Activated CD4-positive, alpha-beta T cell treated with anti-CD3 and anti-CD28 coated beads for 36 hours (primary cell): ENCODE measurements at regions of chr17 and their contacts with region 1.

Region 1: GRCh38 chr17:8997994-8998628 is 23.2 kb upstream of the NTN1 start:
- DNase-seq: peak; percentile 89
- ATAC-seq: peak; percentile 73
- H3K4me3 Mint-ChIP-seq: no peak overlapping the region
- H3K27ac Mint-ChIP-seq: no peak overlapping the region
- H3K4me1 Mint-ChIP-seq: peaks cover 9% of the 10 kb centered on the region
- H3K27me3 Mint-ChIP-seq: peaks cover 24% of the 10 kb centered on the region

Region 2: GRCh38 chr17:8753976-8754440 is 244.1 kb before region 1 on chr17:
- CTCF ChIA-PET with region 1: interaction called, 5 read pairs
- POLR2A ChIA-PET with region 1: no interaction called
- intact Hi-C with region 1: loop called (anchors 1 to 5 kb)
- DNase-seq: no peak
- ATAC-seq: no peak
- H3K4me3 Mint-ChIP-seq: no peak overlapping the region
- H3K27ac Mint-ChIP-seq: no peak overlapping the region
- H3K4me1 Mint-ChIP-seq: no peaks in the 10 kb centered on the region
- H3K27me3 Mint-ChIP-seq: peaks cover 15% of the 10 kb centered on the region

Region 3: DNA sequence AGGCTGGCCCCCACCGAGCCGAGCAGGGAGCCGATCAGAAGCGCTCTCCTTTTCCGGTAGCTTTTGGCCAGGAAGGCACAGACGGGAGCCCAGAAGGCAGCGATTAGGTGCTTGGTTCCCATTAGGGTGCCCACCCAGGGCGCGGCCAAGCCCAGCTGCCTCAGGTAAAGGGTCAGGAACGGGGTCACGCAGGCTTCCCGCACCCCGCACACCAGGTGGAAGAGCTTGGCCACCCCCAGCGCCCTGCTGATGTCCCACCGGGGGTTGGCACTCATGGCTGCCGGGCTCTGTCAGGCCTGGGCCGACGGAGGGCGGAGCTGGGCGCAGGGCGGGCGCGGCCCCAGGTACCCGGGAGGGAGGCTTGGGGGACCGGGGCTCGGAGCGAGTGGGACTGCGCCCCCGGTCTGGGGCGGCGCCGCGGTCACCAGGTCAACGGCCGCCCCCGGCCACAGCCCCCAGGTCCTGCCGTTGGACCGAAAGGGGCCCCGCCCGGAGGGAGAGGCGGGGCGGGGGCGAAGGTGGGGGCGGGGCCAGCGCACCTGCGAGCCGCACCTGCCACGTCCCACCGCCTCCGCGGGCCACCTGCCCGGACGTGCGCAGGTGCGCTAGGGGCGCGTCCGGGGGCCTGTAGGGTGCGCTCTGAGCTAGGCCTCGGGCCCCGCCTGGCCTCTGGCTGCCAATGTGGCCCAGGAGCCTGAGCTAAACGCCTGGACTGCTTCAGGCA is 199.1 kb before region 1 on chr17 and contains the start of gene MFSD6L:
- CTCF ChIA-PET with region 1: interaction called, 8 read pairs
- POLR2A ChIA-PET with region 1: no interaction called
- intact Hi-C with region 1: loop called (anchors 1 to 5 kb)
- DNase-seq: peak; percentile 37
- ATAC-seq: peak; percentile 49
- H3K4me3 Mint-ChIP-seq: no peak within 1 kb of the TSS
- H3K27ac Mint-ChIP-seq: no peak within 1 kb of the TSS
- H3K4me1 Mint-ChIP-seq: no peaks in the 10 kb centered on the region
- H3K27me3 Mint-ChIP-seq: no peaks in the 10 kb centered on the region
- total RNA-seq, gene MFSD6L: 0.07 TPM

Region 4: DNA sequence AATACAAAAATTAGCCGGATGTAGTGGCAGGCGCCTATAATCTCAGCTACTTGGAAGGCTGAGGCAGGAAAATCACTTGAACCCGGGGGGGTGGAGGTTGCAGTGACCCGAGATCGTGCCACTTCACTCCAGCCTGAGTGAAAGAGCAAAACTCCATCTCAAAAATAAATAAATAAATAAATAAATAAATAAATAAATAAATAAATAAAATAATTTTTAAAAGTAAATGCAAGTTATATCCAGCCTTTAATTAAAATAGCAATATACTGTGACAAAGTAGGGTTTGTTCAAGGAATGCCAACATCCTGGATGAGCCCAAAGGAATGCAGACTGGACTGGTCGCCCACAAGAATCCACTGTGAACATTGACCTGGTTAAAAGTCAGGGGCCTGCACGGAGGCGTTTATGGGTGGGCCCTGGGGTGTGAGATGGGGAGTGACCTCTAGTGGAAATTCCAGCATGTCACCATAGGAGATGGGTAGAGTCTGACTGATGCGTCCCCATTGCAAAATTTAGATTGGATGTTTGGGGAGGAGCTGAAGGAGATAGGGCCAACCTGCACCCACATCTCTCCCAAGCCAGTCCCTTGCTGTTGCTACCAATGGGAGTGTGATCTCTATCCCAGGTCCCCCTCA is 22.9 kb before region 1 on chr17:
- CTCF ChIA-PET with region 1: interaction called, 13 read pairs
- POLR2A ChIA-PET with region 1: no interaction called
- intact Hi-C with region 1: no loop called
- DNase-seq: no peak
- ATAC-seq: no peak
- H3K4me3 Mint-ChIP-seq: no peak overlapping the region
- H3K27ac Mint-ChIP-seq: no peak overlapping the region
- H3K4me1 Mint-ChIP-seq: no peaks in the 10 kb centered on the region
- H3K27me3 Mint-ChIP-seq: no peaks in the 10 kb centered on the region

Region 5: GRCh38 chr17:9228408-9229151 is 230.5 kb after region 1 on chr17:
- CTCF ChIA-PET with region 1: no interaction called
- POLR2A ChIA-PET with region 1: no interaction called
- intact Hi-C with region 1: no loop called
- DNase-seq: peak; percentile 26
- ATAC-seq: peak; percentile 67
- H3K4me3 Mint-ChIP-seq: no peak overlapping the region
- H3K27ac Mint-ChIP-seq: no peak overlapping the region
- H3K4me1 Mint-ChIP-seq: peaks cover 2% of the 10 kb centered on the region
- H3K27me3 Mint-ChIP-seq: no peaks in the 10 kb centered on the region

Region 6: DNA sequence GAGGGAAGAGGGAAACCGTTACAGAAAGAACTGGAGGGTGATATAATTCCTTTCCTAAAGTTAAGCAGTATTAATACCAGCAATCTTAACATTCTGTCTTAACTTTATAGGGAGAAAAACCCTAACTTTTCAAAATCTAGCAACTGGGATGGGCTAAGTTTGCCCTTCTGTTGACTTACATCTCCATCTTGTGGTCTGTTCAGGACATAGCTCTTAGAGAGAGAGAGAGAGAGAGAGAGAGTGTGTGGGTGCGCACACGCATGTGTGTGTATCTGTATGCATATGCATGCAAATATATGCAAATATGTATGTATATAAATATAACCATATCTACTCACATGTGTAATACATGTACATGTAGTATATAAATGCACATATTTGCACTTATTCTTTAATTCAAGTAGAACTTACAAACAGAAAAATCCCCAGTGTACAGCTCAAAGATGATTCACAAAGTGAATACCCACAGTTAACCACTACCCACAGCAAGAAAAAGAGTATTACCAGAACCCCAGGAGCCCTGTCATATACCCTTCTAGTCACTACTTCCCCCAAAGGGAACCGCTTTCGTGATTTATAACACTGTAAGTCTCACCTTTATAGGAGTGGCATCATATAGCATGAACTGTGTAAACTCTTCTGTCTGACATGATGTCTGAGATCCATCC is 531.1 kb after region 1 on chr17:
- CTCF ChIA-PET with region 1: interaction called, 5 read pairs
- POLR2A ChIA-PET with region 1: no interaction called
- intact Hi-C with region 1: loop called (anchors 2 to 5 kb)
- DNase-seq: peak; percentile 19
- ATAC-seq: peak; percentile 97
- H3K4me3 Mint-ChIP-seq: no peak overlapping the region
- H3K27ac Mint-ChIP-seq: no peak overlapping the region
- H3K4me1 Mint-ChIP-seq: peaks cover 12% of the 10 kb centered on the region
- H3K27me3 Mint-ChIP-seq: no peaks in the 10 kb centered on the region